ENCODE measurements at regions of chr3 and their contacts with region 1.

Region 1: GRCh38 chr3:182183716-182184430 is 472.1 kb downstream of the SOX2 start:
- DNase-seq: no peak
- H3K4me3 ChIP-seq: no peak overlapping the region
- H3K27ac ChIP-seq: no peak overlapping the region
- H3K4me1 ChIP-seq: no peaks in the 10 kb centered on the region
- H3K27me3 ChIP-seq: no peaks in the 10 kb centered on the region
- CTCF ChIP-seq: no peak
- POLR2A ChIP-seq: no peak

Region 2: DNA sequence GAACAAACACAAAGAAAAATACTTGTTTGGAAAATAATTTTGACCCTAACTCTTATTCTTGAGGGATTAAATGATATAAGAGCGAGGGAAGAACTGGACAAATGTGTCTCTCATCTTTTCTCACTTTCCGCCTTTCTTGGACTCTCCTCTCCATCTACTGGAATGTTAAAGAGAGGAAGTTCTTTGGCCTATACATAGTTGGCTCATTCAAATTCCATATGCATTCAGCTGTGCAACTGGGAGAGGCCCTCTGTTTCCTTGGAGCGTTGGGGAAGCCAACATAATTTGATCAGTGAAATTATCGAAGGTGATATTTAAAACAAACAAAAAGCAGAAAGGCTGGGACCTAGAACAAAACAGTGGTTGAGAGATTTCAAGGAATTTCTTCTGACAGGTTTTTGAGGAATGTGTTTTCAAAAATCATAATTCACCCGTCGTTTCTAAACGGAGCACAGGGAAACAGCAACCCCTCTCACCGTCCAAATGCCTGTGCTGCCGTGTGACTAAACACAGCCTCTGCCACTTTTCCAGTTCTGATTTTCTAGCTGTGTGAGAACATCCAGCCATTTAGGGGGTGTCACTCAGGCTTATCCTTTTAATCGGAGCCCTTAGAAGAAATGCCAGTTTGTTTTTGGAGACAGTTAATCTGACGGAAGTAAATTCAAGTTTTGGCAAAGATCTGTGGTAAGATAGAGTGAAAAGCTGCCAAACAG is 17.7 kb after region 1 on chr3:
- intact Hi-C with region 1: loop called (anchors 1 kb)
- DNase-seq: no peak
- H3K4me3 ChIP-seq: no peak overlapping the region
- H3K27ac ChIP-seq: no peak overlapping the region
- H3K4me1 ChIP-seq: no peaks in the 10 kb centered on the region
- H3K27me3 ChIP-seq: no peaks in the 10 kb centered on the region
- CTCF ChIP-seq: no peak
- POLR2A ChIP-seq: no peak

Measured in breast epithelium (tissue), 4 donors.